Activated B cell treated with CpG ODN at 0.5 μM for 24 hours (primary cell): ENCODE measurements at regions of chr21 and their contacts with region 1.

Region 1: DNA sequence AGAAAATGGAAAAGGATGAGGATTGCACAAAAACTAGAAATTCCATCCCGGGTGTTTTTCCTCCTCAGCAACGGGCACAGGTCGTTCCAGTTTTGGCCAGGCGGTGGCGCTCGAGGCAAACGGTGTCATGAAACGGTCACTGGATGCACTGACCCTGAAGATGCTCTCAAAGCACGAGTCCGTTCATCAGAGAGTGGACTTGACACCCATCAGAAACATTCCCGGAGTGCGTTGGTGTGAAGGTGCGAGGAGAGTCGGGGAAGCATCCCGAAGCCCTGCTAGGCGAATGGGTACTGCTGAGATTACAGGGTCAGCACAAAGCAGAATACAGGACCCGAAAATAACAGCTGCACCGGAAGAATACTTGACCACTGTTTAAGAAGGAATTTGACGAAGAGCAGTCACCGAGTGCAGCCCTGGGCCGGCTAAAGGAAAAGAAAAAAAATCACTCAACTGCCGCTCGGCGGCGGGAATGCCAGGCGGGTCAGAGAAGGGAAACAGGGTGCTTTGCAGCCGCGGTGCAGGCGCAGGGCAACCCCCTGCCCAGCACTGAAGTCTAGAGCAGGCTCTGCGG is 71.7 kb upstream of the ETS2 start:
- DNase-seq: peak; percentile 71
- ATAC-seq: peak; percentile 47
- H3K4me3 Mint-ChIP-seq: peak overlapping the region; percentile 62
- H3K27ac Mint-ChIP-seq: no peak overlapping the region
- H3K4me1 Mint-ChIP-seq: peaks cover 12% of the 10 kb centered on the region
- H3K27me3 Mint-ChIP-seq: peaks cover 23% of the 10 kb centered on the region
- CTCF ChIP-seq: peak; percentile 74

Region 2: GRCh38 chr21:38460171-38460742 is 273.8 kb before region 1 on chr21:
- CTCF ChIA-PET with region 1: no interaction called
- POLR2A ChIA-PET with region 1: no interaction called
- intact Hi-C with region 1: no loop called
- DNase-seq: no peak
- ATAC-seq: no peak
- H3K4me3 Mint-ChIP-seq: no peak overlapping the region
- H3K27ac Mint-ChIP-seq: no peak overlapping the region
- H3K4me1 Mint-ChIP-seq: no peaks in the 10 kb centered on the region
- H3K27me3 Mint-ChIP-seq: no peaks in the 10 kb centered on the region
- CTCF ChIP-seq: no peak

Region 3: DNA sequence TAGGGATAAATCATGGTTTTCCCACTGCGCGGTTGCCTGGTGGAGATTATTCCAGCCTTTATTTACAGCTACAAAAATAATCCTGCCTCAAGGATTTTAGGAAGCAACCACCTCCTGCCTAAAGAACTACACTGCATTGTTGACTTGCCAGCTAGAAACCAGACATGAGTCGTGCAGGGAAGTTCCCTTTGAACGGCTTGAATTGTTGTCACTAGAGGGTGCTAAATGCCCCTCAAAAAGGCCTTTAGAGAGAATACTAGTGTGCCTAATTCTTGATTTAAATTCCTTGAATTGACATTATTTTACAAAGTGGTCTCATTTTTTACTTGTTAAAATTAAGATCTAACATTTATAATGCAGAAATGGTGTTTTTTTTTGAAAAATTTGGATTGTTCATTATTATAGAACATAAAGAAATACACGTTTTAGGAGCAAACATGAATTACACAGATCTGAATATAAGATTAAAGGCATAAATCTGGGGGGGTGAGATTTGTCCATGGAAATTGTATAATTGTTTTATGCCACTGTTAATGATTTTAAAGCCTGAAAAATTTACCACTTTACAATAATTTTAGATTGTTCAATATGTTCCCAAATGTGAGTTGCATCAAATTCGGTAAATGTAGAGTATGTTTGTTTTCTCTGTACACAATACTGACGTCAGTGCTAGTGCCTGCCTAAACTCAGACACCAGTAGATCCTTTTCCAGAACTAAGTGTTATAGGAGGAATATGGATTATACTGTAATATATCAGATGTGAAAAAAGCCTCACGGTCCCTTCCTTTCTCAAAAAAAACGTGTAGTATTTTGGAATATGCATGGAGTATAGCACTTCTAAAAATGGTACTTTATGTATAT is 228.2 kb before region 1 on chr21:
- CTCF ChIA-PET with region 1: no interaction called
- POLR2A ChIA-PET with region 1: no interaction called
- intact Hi-C with region 1: loop called (anchors 5 kb)
- DNase-seq: no peak
- ATAC-seq: no peak
- H3K4me3 Mint-ChIP-seq: no peak overlapping the region
- H3K27ac Mint-ChIP-seq: no peak overlapping the region
- H3K4me1 Mint-ChIP-seq: no peaks in the 10 kb centered on the region
- H3K27me3 Mint-ChIP-seq: peaks cover 14% of the 10 kb centered on the region
- CTCF ChIP-seq: no peak

Region 4: DNA sequence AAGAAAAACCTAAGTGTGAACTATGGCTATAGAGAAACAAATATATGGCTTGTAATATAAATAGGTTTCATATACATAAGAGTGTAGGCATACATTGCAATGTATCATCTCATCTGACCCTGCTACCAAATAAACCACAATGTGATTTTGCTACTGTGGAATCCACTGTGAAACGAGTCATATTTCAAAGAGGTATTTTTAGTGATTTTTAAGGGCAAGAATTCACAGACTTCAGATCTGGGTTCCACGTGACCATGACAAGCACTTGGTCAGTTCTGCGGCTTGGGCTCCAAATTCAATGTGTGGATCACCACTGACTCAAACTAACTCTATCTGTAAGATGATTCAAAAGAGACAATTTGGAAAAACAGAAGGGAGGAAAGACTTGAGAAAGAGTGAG is 88.8 kb before region 1 on chr21:
- CTCF ChIA-PET with region 1: no interaction called
- POLR2A ChIA-PET with region 1: no interaction called
- intact Hi-C with region 1: no loop called
- DNase-seq: no peak
- ATAC-seq: no peak
- H3K4me3 Mint-ChIP-seq: no peak overlapping the region
- H3K27ac Mint-ChIP-seq: no peak overlapping the region
- H3K4me1 Mint-ChIP-seq: no peaks in the 10 kb centered on the region
- H3K27me3 Mint-ChIP-seq: no peaks in the 10 kb centered on the region
- CTCF ChIP-seq: no peak

Region 5: DNA sequence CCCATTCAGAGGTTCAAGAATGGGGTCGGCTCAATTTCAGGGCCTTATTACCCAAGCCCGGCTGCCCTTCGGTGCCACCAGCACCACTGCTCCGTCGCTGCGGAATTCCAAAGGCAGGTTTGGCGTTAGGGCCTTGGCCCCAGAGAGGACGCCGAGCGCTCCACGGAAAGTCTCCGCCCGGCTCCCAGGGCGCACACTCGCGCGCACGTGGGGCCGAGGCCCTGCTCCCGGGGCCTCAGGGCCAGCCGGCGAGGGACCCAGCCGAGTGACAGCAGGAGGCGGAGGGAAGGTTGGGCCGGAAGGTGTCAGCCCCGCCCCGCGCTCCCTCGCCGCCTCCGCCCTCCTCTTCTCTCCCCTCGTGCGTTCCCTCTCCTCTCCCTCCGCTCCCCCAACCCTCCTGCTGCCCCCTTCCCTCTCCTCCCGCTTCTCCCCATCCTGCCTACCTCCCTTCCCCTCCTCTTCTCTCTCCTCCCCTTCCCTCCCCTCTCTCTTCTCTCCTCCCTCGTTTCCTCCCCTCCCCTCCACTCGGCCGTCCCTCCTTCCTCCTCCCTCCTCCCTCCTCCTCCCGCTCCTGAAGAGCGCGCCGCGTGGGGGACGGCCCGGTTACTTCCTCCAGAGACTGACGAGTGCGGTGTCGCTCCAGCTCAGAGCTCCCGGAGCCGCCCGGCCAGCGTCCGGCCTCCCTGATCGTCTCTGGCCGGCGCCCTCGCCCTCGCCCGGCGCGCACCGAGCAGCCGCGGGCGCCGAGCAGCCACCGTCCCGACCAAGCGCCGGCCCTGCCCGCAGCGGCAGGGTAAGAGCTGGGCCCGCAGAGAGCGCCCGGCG is 71.5 kb after region 1 on chr21 and contains the start of gene ETS2:
- CTCF ChIA-PET with region 1: no interaction called
- POLR2A ChIA-PET with region 1: no interaction called
- intact Hi-C with region 1: loop called (anchors 1 kb)
- DNase-seq: peak; percentile 55
- ATAC-seq: peak; percentile 83
- H3K4me3 Mint-ChIP-seq: peak within 1 kb of the TSS; percentile 83
- H3K27ac Mint-ChIP-seq: peak within 1 kb of the TSS; percentile 30
- H3K4me1 Mint-ChIP-seq: peaks cover 16% of the 10 kb centered on the region
- H3K27me3 Mint-ChIP-seq: peaks cover 9% of the 10 kb centered on the region
- CTCF ChIP-seq: no peak
- total RNA-seq, gene ETS2: 4.4 and 4.5 TPM in 2 replicates

Region 6: DNA sequence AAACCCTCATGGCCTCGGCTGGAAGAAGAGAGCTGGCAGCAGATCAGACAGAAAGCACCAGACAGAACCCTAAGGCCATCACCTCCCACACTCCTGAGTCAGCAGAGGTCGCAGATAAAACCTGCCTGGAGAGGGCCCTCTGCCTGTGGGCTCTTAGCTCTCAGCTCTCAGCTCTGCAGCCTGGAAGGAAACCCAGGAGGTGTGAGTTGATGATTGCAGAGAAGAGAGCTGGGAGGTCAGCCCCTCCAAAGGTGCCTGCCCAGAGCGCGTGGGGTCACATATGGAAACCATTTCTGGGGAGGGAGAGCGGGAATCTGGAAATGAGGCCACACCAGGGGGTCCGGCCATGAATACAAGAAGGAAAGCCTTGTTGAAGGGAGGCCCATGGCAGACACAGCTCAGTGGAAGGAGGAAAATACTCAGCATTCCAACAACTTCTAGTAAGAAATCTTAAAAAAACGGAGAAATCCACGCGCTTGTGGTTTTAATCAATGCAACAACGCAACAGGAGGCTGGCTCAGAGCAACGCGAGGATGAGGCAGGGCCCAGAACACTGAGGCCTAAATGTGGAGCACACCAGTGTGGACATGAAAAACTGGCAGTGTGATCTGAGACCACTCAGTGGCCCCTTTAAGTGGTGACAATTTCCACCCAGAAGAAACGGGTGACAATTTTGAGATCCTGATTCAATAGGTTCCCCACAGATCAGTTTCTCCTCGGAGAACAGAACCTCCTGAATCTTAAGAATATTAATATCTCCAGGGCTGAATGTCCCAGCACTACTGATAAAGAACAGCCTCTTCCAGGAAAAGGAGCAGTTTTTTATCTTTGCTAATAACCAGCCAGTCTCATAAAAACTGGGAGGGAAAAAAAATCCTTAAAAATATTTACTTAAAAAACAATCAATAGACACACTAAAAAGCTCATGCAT is 403.5 kb after region 1 on chr21:
- CTCF ChIA-PET with region 1: interaction called, 19 read pairs
- POLR2A ChIA-PET with region 1: no interaction called
- intact Hi-C with region 1: loop called (anchors 1 kb)
- DNase-seq: no peak
- ATAC-seq: no peak
- H3K4me3 Mint-ChIP-seq: no peak overlapping the region
- H3K27ac Mint-ChIP-seq: no peak overlapping the region
- H3K4me1 Mint-ChIP-seq: no peaks in the 10 kb centered on the region
- H3K27me3 Mint-ChIP-seq: peaks cover 3% of the 10 kb centered on the region
- CTCF ChIP-seq: no peak